ENCODE measurements at regions of chr9 and their contacts with region 1.

Region 1: GRCh38 chr9:122125158-122125508 is 32.0 kb upstream of the TTLL11 start:
- DNase-seq: peak in 1 of 2 experiments; percentile 92
- H3K4me3 ChIP-seq: 0 out of 8 replicates have a peak overlapping the region, but pooled peaks of 1 of the 4 experiments have one; percentile 67
- H3K27ac ChIP-seq: no peak overlapping the region
- H3K4me1 ChIP-seq: peaks cover 0 to 10% (median 3%) of the 10 kb centered on the region in 4 experiments; a peak in 6 of 7 replicates
- H3K27me3 ChIP-seq: peaks cover 9 to 26% (median 24%) of the 10 kb centered on the region in 4 experiments
- CTCF ChIP-seq: peak in 2 of 3 experiments; percentile 95 to 96; a peak in 3 of 4 replicates
- EP300 ChIP-seq: no peak
- POLR2A ChIP-seq: no peak
- RAD21 ChIP-seq: peak; percentile 99

Region 2: DNA sequence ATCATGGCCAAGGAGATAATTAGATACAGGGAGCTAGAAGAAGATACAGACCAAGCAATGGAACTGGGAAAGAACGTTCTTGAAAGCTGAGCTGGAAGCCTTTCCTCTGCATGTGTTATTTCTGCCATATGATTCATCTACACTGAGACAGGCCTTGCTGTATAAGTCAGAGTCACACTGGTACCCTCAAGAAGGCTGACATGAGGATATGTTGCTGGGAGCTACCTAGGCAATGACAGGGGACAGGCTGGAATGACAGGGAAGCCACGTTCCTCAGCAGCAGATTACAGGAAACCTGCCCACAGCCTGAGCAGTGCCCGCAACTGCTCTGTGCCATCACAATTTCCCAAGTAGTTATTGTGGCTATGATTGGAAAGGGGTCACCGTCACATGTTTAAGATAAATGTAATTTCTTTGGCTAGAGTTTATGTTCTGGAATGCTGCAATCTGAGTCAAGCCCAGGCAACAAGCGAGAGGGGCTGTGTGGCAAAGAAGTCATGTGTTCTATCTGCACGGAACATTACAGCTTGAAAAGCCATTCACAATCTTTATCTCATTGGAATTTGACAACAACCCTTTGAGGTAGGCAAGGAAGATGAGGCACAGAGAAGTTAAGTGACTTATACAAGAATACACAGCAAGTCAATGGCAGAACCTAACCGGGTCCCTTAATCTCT is 140.3 kb before region 1 on chr9:
- CTCF ChIA-PET with region 1: no interaction called
- POLR2A ChIA-PET with region 1: no interaction called
- DNase-seq: no peak
- H3K4me3 ChIP-seq: no peak overlapping the region
- H3K27ac ChIP-seq: no peak overlapping the region
- H3K4me1 ChIP-seq: no peaks in the 10 kb centered on the region
- H3K27me3 ChIP-seq: no peaks in the 10 kb centered on the region; a peak in 2 of 7 replicates
- CTCF ChIP-seq: no peak
- EP300 ChIP-seq: no peak
- POLR2A ChIP-seq: no peak
- RAD21 ChIP-seq: no peak

Region 3: DNA sequence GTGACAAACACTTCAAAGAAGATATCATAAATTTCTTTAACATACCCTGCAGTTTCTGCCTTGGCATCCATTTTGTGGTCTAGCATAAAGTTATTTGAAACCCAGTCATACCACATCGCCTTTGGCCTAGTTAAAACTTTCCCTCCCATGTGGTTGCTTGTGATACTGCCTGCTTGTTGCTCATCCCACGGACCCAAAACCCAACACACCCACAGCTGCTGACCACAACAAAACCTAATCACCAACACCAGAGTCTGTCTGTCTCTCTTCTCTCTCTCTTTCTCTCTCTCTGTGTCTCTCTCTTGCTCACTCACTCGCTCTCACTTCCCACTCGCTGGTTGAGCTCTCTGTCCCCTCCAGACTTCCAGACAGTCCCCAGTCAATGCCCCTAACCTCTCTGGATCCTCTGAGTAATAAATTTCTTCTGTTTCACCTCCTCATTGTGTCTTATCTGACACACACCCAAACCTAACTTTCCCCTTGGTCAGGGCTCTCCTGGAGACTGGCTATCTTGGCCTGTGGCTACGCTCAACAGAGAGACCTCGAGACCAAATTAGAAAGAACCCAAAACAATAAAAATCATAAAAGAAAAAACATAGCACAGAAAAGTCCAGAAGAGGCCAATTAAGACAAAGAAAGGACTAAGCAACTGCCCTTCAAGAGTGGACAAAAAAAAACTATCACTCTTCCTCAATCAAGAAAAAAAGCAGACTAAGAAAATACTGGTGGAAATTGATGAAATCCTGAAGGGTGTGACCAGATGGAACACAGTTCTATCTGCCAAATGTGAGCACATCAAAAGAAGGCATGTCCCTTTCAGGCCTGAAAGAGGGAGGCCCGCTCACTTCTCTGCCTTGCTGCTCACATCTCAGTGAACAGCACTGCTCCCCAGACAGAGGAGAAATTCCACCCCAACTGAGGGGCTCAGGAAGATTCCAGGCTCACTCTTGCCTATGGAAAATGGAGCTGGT is 73.5 kb before region 1 on chr9:
- CTCF ChIA-PET with region 1: no interaction called
- POLR2A ChIA-PET with region 1: no interaction called
- DNase-seq: no peak
- H3K4me3 ChIP-seq: no peak overlapping the region
- H3K27ac ChIP-seq: no peak overlapping the region
- H3K4me1 ChIP-seq: 0 out of 7 replicates have a peak, but pooled peaks cover 0 to 2% (median 0%) of the 10 kb centered on the region in 4 experiments
- H3K27me3 ChIP-seq: no peaks in the 10 kb centered on the region
- CTCF ChIP-seq: no peak
- EP300 ChIP-seq: no peak
- POLR2A ChIP-seq: no peak
- RAD21 ChIP-seq: no peak

Region 4: DNA sequence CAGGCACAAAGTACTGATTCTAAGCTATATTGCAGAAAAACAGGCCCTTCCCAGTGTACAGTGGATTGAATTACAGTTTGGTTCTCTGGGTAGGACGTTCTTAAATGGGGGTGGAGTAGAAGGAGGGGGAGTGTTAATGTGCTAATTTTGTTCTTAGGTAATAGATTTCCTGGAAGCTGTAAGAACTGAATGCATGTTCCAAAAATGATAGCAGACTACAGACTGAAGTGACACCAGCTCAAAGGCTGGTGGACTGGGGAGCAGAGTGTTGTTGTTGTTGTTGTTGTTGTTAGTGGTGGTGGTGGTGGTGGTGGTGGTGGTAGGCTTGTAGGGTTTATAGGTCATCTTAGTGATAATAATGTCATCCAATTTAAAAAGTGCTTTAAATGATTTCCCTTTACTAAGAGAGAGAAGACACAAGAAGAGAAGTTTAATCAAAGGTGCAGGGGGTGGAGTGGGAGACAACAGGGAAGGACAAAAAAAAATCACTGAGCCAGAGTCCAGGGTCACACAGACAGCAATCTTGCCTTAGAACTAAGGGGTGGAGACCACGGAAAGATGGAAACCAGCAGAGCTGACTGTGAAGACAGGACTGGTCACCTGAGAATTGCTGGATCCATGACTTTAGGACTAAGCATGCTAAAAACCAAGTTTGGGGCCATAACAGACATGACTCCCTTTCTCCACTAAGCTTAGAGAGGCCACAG is 59.1 kb before region 1 on chr9:
- CTCF ChIA-PET with region 1: no interaction called
- POLR2A ChIA-PET with region 1: no interaction called
- DNase-seq: no peak
- H3K4me3 ChIP-seq: no peak overlapping the region
- H3K27ac ChIP-seq: no peak overlapping the region
- H3K4me1 ChIP-seq: no peaks in the 10 kb centered on the region
- H3K27me3 ChIP-seq: no peaks in the 10 kb centered on the region; a peak in 2 of 7 replicates
- CTCF ChIP-seq: no peak
- EP300 ChIP-seq: no peak
- POLR2A ChIP-seq: no peak
- RAD21 ChIP-seq: no peak

Region 5: GRCh38 chr9:122092611-122093506 is 32.3 kb before region 1 on chr9 and contains the start of gene TTLL11:
- CTCF ChIA-PET with region 1: interaction called, 405 read pairs
- POLR2A ChIA-PET with region 1: interaction called, 9 read pairs
- DNase-seq: peak; percentile 49 to 95
- H3K4me3 ChIP-seq: peak within 1 kb of the TSS; percentile 49 to 77 (median 66)
- H3K27ac ChIP-seq: no peak within 1 kb of the TSS
- H3K4me1 ChIP-seq: peaks cover 0 to 6% (median 0%) of the 10 kb centered on the region in 4 experiments; a peak in 4 of 7 replicates
- H3K27me3 ChIP-seq: peaks cover 0 to 19% (median 13%) of the 10 kb centered on the region in 4 experiments; a peak in 5 of 7 replicates
- CTCF ChIP-seq: no peak
- EP300 ChIP-seq: no peak
- POLR2A ChIP-seq: no peak
- RAD21 ChIP-seq: no peak
- total RNA-seq, gene TTLL11: 0.80 and 0.86 TPM in 2 replicates

Region 6: DNA sequence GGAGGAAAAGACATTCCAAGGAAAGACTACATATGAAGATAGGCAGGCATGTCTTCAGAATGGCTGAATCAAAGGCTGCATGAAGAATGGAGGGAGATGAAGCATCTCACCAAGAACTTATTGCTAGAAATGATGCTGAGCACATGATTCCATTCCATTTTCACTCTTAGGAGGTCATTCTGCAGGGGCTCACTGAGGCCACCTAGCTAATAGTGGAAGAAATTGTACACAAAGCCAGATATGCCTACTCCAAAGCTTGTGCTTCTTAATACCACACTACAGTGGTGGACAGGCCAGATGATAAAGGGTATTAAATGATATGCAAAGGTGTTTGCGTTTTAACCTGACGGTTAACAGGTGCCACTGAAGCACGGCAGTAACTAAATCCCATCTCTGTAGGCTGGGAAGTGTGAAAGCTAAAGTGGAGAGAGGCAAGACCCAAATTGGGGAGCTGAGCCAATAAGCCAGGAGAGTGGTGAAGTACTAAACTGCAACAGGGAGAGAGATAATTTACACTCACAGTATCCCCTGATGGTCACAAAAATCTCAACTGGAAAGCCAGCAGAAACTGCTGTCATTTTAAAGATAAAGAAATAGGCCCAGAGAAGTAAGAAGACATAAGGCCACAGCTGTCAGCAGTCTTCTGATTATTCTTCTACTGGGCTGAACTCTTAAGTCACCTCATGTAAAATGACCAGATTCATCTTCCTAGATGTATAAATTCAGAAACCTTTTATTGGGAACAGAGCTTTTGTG is 19.9 kb after region 1 on chr9:
- CTCF ChIA-PET with region 1: interaction called, 152 read pairs
- POLR2A ChIA-PET with region 1: interaction called, 3 read pairs
- DNase-seq: no peak
- H3K4me3 ChIP-seq: no peak overlapping the region
- H3K27ac ChIP-seq: no peak overlapping the region
- H3K4me1 ChIP-seq: no peaks in the 10 kb centered on the region
- H3K27me3 ChIP-seq: no peaks in the 10 kb centered on the region
- CTCF ChIP-seq: peak in 2 of 3 experiments; percentile 16 to 52; a peak in 2 of 4 replicates
- EP300 ChIP-seq: no peak
- POLR2A ChIP-seq: no peak
- RAD21 ChIP-seq: peak; percentile 9 to 31; a peak in 2 of 4 replicates

Region 7: GRCh38 chr9:122190609-122191381 is 65.7 kb after region 1 on chr9:
- CTCF ChIA-PET with region 1: interaction called, 13 read pairs
- POLR2A ChIA-PET with region 1: no interaction called
- DNase-seq: no peak
- H3K4me3 ChIP-seq: no peak overlapping the region
- H3K27ac ChIP-seq: no peak overlapping the region
- H3K4me1 ChIP-seq: peaks cover 0 to 3% (median 1%) of the 10 kb centered on the region in 4 experiments; a peak in 2 of 7 replicates
- H3K27me3 ChIP-seq: no peaks in the 10 kb centered on the region; a peak in 1 of 7 replicates
- CTCF ChIP-seq: no peak
- EP300 ChIP-seq: no peak
- POLR2A ChIP-seq: no peak
- RAD21 ChIP-seq: no peak

Region 8: GRCh38 chr9:122221183-122221811 is 96.2 kb after region 1 on chr9:
- CTCF ChIA-PET with region 1: interaction called, 56 read pairs
- POLR2A ChIA-PET with region 1: interaction called, 6 read pairs
- DNase-seq: peak in 1 of 2 experiments; percentile 85
- H3K4me3 ChIP-seq: peak overlapping the region; percentile 8 to 59 (median 26); a peak in 6 of 8 replicates
- H3K27ac ChIP-seq: no peak overlapping the region
- H3K4me1 ChIP-seq: peaks cover 5 to 52% (median 40%) of the 10 kb centered on the region in 4 experiments
- H3K27me3 ChIP-seq: peaks cover 93 to 100% (median 99%) of the 10 kb centered on the region in 4 experiments
- CTCF ChIP-seq: no peak
- EP300 ChIP-seq: no peak
- POLR2A ChIP-seq: no peak
- RAD21 ChIP-seq: no peak

Region 9: GRCh38 chr9:122350638-122351355 is 225.7 kb after region 1 on chr9:
- CTCF ChIA-PET with region 1: interaction called, 544 read pairs
- POLR2A ChIA-PET with region 1: interaction called, 3 read pairs
- DNase-seq: peak in 1 of 2 experiments; percentile 94
- H3K4me3 ChIP-seq: no peak overlapping the region
- H3K27ac ChIP-seq: no peak overlapping the region
- H3K4me1 ChIP-seq: peaks cover 0 to 9% (median 5%) of the 10 kb centered on the region in 4 experiments; a peak in 5 of 7 replicates
- H3K27me3 ChIP-seq: peaks cover 0 to 17% (median 9%) of the 10 kb centered on the region in 4 experiments; a peak in 6 of 7 replicates
- CTCF ChIP-seq: peak; percentile 98
- EP300 ChIP-seq: no peak
- POLR2A ChIP-seq: no peak
- RAD21 ChIP-seq: peak; percentile 100